ENCODE measurements at regions of chr3 and their contacts with region 1.

Region 1: GRCh38 chr3:60582288-60582687 is 669.0 kb downstream of the FHIT start:
- DNase-seq: no peak
- H3K4me3 ChIP-seq: no peak overlapping the region
- H3K27ac ChIP-seq: no peak overlapping the region
- H3K4me1 ChIP-seq: peaks cover 15% of the 10 kb centered on the region
- H3K27me3 ChIP-seq: no peaks in the 10 kb centered on the region
- CTCF ChIP-seq: peak in 1 of 2 donors; percentile 31

Region 2: DNA sequence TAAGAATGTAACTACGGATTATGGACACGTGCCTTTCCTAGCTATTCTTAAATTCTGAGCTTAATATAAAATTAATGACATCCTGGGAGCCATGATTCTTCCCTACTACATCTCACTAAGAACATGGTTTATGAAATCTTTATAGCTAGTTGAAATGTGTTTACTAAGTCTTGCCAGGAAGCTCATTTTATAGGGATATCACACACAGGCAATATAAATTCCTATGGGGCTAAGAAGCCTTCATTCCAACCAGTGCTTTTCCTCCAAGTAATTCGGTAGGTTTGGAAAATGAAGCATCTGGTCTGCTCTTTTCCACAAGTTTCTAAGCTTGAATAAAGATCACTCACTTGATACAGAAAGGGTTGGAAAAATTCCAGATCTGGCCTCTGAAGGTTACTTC is 133.6 kb before region 1 on chr3:
- CTCF ChIA-PET with region 1: no interaction called
- dilution Hi-C with region 1: no loop called
- in situ Hi-C with region 1: no loop called
- intact Hi-C with region 1: no loop called
- DNase-seq: no peak
- H3K4me3 ChIP-seq: no peak overlapping the region
- H3K27ac ChIP-seq: no peak overlapping the region
- H3K4me1 ChIP-seq: no peaks in the 10 kb centered on the region
- H3K27me3 ChIP-seq: no peaks in the 10 kb centered on the region
- CTCF ChIP-seq: no peak

Region 3: GRCh38 chr3:60461267-60461666 is 121.0 kb before region 1 on chr3:
- CTCF ChIA-PET with region 1: no interaction called
- dilution Hi-C with region 1: no loop called
- in situ Hi-C with region 1: no loop called
- intact Hi-C with region 1: no loop called
- DNase-seq: no peak
- H3K4me3 ChIP-seq: no peak overlapping the region
- H3K27ac ChIP-seq: no peak overlapping the region
- H3K4me1 ChIP-seq: no peaks in the 10 kb centered on the region
- H3K27me3 ChIP-seq: no peaks in the 10 kb centered on the region
- CTCF ChIP-seq: no peak

Region 4: GRCh38 chr3:60630953-60631352 is 48.7 kb after region 1 on chr3:
- CTCF ChIA-PET with region 1: no interaction called
- dilution Hi-C with region 1: no loop called
- in situ Hi-C with region 1: no loop called
- intact Hi-C with region 1: no loop called
- DNase-seq: no peak
- H3K4me3 ChIP-seq: no peak overlapping the region
- H3K27ac ChIP-seq: no peak overlapping the region
- H3K4me1 ChIP-seq: no peaks in the 10 kb centered on the region
- H3K27me3 ChIP-seq: no peaks in the 10 kb centered on the region
- CTCF ChIP-seq: no peak

Region 5: DNA sequence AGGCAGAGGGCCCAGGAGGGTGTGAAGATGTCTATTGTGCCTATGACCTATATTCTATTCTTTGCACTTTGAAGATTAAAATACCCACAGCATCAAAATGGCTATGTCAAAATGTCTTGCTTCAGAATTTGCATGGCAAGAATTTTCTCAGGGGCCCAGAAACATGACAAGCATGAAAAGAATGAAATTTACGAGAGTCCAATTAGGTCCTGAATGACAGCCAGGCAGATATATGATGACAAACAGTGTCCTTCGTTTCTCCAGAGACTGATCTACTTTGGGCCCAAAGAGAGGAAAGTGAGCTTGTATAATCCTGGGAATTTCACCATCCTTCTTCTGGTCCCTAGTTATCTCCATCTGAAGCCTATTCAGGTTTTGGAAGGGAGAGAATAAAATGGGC is 59.1 kb after region 1 on chr3:
- CTCF ChIA-PET with region 1: no interaction called
- dilution Hi-C with region 1: no loop called
- in situ Hi-C with region 1: no loop called
- intact Hi-C with region 1: no loop called
- DNase-seq: no peak
- H3K4me3 ChIP-seq: no peak overlapping the region
- H3K27ac ChIP-seq: no peak overlapping the region
- H3K4me1 ChIP-seq: no peaks in the 10 kb centered on the region
- H3K27me3 ChIP-seq: no peaks in the 10 kb centered on the region
- CTCF ChIP-seq: no peak

Region 6: GRCh38 chr3:60948484-60948883 is 366.2 kb after region 1 on chr3:
- CTCF ChIA-PET with region 1: no interaction called
- dilution Hi-C with region 1: no loop called
- in situ Hi-C with region 1: no loop called
- intact Hi-C with region 1: loop called (anchors 1 kb)
- DNase-seq: peak; percentile 15
- H3K4me3 ChIP-seq: no peak overlapping the region
- H3K27ac ChIP-seq: no peak overlapping the region
- H3K4me1 ChIP-seq: peaks cover 3% of the 10 kb centered on the region
- H3K27me3 ChIP-seq: no peaks in the 10 kb centered on the region
- CTCF ChIP-seq: peak in 1 of 2 donors; percentile 42

Region 7: DNA sequence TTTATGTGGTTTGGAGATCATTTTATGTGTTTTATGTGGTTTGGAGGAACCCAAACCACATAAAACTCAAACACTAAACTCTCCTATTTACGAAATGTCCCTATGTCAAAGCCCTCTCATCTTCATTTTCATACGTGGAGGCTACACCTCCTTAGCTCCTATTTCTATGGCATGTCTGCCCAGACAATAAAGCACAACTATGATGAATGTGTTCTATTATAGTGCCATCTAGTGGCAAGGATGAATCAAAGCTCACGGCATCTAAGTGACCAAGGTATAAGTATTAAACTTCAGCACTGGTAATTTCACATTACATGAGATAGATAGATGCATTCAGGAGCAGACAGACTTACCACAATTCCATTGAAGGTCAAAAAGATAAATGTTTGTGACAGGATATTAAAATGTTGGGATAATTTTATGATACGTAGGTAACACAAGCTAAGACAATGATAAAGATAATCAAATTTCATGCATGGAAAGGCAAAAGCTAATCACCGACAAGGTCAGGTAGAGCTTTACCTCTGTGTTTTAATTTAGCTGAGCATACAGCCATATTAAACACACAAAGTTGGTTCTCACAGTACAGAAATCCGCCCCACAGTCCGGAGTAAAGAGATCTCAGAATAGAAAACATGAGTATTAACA is 799.6 kb after region 1 on chr3:
- CTCF ChIA-PET with region 1: no interaction called
- dilution Hi-C with region 1: no loop called
- in situ Hi-C with region 1: no loop called
- intact Hi-C with region 1: loop called (anchors 10 kb)
- DNase-seq: peak; percentile 27
- H3K4me3 ChIP-seq: no peak overlapping the region
- H3K27ac ChIP-seq: no peak overlapping the region
- H3K4me1 ChIP-seq: no peaks in the 10 kb centered on the region
- H3K27me3 ChIP-seq: no peaks in the 10 kb centered on the region
- CTCF ChIP-seq: peak; percentile 57 to 74

Region 8: GRCh38 chr3:61530355-61530754 is 948.1 kb after region 1 on chr3:
- CTCF ChIA-PET with region 1: no interaction called
- dilution Hi-C with region 1: no loop called
- in situ Hi-C with region 1: no loop called
- intact Hi-C with region 1: loop called (anchors 10 kb)
- DNase-seq: peak; percentile 21
- H3K4me3 ChIP-seq: no peak overlapping the region
- H3K27ac ChIP-seq: no peak overlapping the region
- H3K4me1 ChIP-seq: no peaks in the 10 kb centered on the region
- H3K27me3 ChIP-seq: no peaks in the 10 kb centered on the region
- CTCF ChIP-seq: peak; percentile 50 to 66